Right ventricle myocardium inferior (tissue), 1 donor: ENCODE measurements at regions of chr15 and their contacts with region 1.

Region 1: GRCh38 chr15:90362936-90363212 is 10.8 kb downstream of the ZNF774 start:
- DNase-seq: no peak
- ATAC-seq: peak; percentile 70

Region 2: GRCh38 chr15:90387537-90388461 is 24.9 kb after region 1 on chr15 and contains the start of gene IQGAP1:
- intact Hi-C with region 1: loop called (anchors 2 kb)
- DNase-seq: peak; percentile 99
- ATAC-seq: peak; percentile 99
- total RNA-seq, gene IQGAP1: 47.6 TPM

Region 3: GRCh38 chr15:90465140-90465922 is 102.5 kb after region 1 on chr15:
- intact Hi-C with region 1: loop called (anchors 5 kb)
- DNase-seq: no peak
- ATAC-seq: peak; percentile 55

Region 4: DNA sequence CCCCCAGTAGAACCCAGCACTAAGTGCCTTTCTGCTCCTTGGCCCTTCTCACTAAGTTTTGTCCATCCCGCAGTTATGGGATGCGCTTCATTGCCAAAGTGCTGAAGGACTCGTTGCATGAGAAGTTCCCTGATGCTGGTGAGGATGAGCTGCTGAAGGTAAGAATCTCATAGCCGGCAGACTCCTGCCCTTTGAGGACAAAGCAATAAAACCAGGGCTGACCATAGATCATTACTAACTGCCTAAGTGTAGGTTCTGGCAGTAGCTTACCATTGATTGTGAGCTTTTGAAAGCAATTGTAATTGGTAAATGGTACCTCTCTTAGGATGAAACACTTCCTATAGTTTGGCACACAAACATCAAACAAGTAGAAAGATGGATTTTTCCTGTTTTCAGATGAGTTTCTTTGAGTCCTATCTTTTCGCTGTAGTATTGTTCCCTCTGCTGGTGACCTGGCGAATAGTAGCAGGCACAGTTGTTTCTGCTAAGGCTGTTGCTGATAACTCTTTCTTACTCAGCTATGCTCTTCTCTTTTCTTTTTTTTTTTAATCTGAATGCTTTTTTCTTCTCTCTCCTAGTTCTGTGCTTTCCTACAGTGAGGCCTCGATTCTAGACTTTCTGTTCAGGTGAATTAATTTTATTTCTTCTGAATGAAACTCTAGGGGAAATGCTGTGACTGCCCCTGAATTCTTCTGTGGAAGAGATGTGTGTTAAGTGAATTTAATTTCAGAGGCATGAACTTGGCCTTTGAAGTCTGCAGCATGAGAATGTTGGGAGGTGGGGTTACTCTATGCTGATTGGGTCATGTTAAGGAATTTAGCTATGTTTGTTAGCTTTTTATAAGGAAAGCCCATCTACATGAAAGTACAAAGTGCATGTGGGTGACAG is 119.5 kb after region 1 on chr15:
- intact Hi-C with region 1: loop called (anchors 2 kb)
- DNase-seq: no peak
- ATAC-seq: peak; percentile 54